RWPE1 (cell line): ENCODE measurements at regions of chr6 and their contacts with region 1.

Region 1: GRCh38 chr6:137416376-137417109 is 77.7 kb downstream of the OLIG3 start:
- DNase-seq: no peak
- H3K27ac ChIP-seq: no peak overlapping the region
- CTCF ChIP-seq: no peak

Region 2: GRCh38 chr6:137372532-137372931 is 44.0 kb before region 1 on chr6:
- CTCF ChIA-PET with region 1: no interaction called
- POLR2A ChIA-PET with region 1: no interaction called
- DNase-seq: no peak
- H3K27ac ChIP-seq: no peak overlapping the region
- CTCF ChIP-seq: no peak

Region 3: DNA sequence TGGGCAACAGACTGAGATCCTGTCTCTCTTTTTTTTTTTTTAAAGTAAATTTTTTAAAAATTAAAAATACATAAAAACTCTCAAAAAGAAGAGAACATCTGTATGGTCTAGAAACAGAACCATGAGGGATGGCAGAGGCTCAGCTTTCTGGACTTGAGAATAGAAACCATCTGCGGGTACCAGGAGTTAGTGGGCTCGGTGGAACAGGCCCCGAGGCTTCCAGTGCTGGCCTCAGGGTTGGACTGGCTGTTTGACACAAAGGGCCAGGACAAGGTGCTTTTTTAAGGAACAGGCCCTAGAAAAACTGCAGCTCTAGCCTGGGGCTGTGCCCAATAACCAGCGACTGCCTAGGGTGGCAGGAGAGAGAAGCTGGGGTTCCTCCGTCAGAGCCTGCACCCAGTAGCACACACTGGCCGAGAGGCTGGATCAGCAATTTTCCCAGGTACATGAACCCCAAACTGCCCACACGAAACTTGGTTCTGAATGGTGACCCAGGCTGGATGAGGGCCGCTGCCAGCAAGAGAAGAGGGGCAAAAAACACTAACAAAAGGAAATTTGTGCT is 208.6 kb after region 1 on chr6:
- CTCF ChIA-PET with region 1: interaction called, 13 read pairs
- POLR2A ChIA-PET with region 1: no interaction called
- DNase-seq: no peak
- H3K27ac ChIP-seq: no peak overlapping the region
- CTCF ChIP-seq: no peak